CD4-positive, alpha-beta T cell (primary cell): ENCODE measurements at regions of chr9 and their contacts with region 1.

Region 1: GRCh38 chr9:77841739-77842386 is 189.7 kb downstream of the GNAQ start:
- DNase-seq: peak in 2 of 14 experiments; percentile 8 to 33
- ATAC-seq: no peak
- H3K4me3 ChIP-seq: no peak overlapping the region
- H3K4me3 Mint-ChIP-seq: no peak overlapping the region
- H3K27ac ChIP-seq: no peak overlapping the region
- H3K27ac Mint-ChIP-seq: peak overlapping the region; percentile 11
- H3K4me1 ChIP-seq: no peaks in the 10 kb centered on the region
- H3K4me1 Mint-ChIP-seq: peaks cover 21% of the 10 kb centered on the region
- H3K27me3 ChIP-seq: no peaks in the 10 kb centered on the region
- H3K27me3 Mint-ChIP-seq: no peaks in the 10 kb centered on the region
- CTCF ChIP-seq: peak; percentile 36

Region 2: GRCh38 chr9:77783518-77783917 is 58.3 kb before region 1 on chr9:
- CTCF ChIA-PET with region 1: no interaction called
- POLR2A ChIA-PET with region 1: no interaction called
- intact Hi-C with region 1: loop called in 1 of 2 experiments (anchors 10 kb)
- DNase-seq: no peak
- ATAC-seq: no peak
- H3K4me3 ChIP-seq: no peak overlapping the region
- H3K4me3 Mint-ChIP-seq: no peak overlapping the region
- H3K27ac ChIP-seq: no peak overlapping the region
- H3K27ac Mint-ChIP-seq: no peak overlapping the region
- H3K4me1 ChIP-seq: no peaks in the 10 kb centered on the region
- H3K4me1 Mint-ChIP-seq: peaks cover 38% of the 10 kb centered on the region
- H3K27me3 ChIP-seq: no peaks in the 10 kb centered on the region
- H3K27me3 Mint-ChIP-seq: no peaks in the 10 kb centered on the region
- CTCF ChIP-seq: no peak